ENCODE measurements at regions of chr9 and their contacts with region 1.

Region 1: GRCh38 chr9:32723789-32724325 is 59.5 kb upstream of the TMEM215 start:
- DNase-seq: no peak
- ATAC-seq: no peak
- H3K4me3 ChIP-seq: no peak overlapping the region
- H3K4me3 Mint-ChIP-seq: no peak overlapping the region
- H3K27ac ChIP-seq: no peak overlapping the region
- H3K27ac Mint-ChIP-seq: no peak overlapping the region
- H3K4me1 ChIP-seq: no peaks in the 10 kb centered on the region
- H3K4me1 Mint-ChIP-seq: no peaks in the 10 kb centered on the region
- H3K27me3 ChIP-seq: no peaks in the 10 kb centered on the region
- H3K27me3 Mint-ChIP-seq: peaks cover 14% of the 10 kb centered on the region
- CTCF ChIP-seq: no peak

Region 2: DNA sequence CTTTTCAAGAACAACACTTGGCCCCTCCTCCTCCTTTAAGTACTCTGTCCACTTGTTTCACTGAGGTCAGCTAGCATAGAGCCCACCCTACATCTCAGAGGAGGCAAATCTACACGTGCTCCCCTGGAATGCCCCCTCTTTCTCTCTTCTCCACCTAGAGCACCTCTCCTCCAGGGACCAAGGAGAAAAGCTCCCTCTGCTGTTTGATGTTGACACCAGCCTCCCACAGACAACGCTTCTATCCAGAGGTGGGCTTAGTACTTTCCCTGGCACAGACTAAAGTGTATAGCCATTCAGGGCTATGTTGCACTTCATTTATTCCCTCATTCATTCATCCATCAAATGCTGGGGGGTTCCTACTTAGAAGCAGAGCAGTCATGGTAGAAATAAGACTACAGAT is 20.2 kb before region 1 on chr9:
- CTCF ChIA-PET with region 1: no interaction called
- POLR2A ChIA-PET with region 1: no interaction called
- intact Hi-C with region 1: no loop called
- DNase-seq: no peak
- ATAC-seq: no peak
- H3K4me3 ChIP-seq: no peak overlapping the region
- H3K4me3 Mint-ChIP-seq: no peak overlapping the region
- H3K27ac ChIP-seq: no peak overlapping the region
- H3K27ac Mint-ChIP-seq: no peak overlapping the region
- H3K4me1 ChIP-seq: no peaks in the 10 kb centered on the region
- H3K4me1 Mint-ChIP-seq: no peaks in the 10 kb centered on the region
- H3K27me3 ChIP-seq: no peaks in the 10 kb centered on the region
- H3K27me3 Mint-ChIP-seq: peaks cover 4% of the 10 kb centered on the region
- CTCF ChIP-seq: no peak

Region 3: DNA sequence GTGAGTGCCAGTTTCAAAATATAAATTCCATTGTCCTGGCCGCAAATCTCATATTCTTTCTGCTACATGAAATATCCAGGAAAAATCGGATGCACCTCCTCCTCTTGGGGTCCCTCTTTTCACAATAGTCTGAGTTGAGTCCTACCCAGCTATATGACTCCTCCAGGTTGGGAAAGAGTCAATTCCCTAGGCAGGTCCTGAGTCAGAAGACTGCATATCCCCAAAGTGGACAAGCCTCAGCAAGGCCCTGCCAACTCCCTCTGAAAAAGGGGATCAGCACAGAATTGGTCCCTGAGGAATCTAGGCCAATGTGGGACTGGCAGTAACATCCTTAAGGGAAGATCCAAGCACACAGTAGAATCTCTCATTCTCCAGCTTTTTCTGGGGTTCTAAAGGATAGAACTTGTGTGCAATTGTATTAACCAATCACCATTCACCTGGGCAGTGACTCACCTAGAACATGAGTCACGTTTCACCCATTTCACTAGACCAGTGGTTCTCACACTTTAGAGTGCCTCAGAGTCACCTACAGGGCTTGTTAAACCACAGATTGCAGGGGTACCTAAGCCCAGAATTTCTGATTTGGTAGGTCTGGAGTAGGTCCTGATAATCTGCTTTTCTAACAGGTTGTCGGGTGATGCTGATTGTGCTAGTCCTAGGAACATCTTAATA is 14.8 kb after region 1 on chr9:
- CTCF ChIA-PET with region 1: no interaction called
- POLR2A ChIA-PET with region 1: no interaction called
- intact Hi-C with region 1: loop called in 1 of 2 experiments (anchors 2 kb)
- DNase-seq: no peak
- ATAC-seq: no peak
- H3K4me3 ChIP-seq: no peak overlapping the region
- H3K4me3 Mint-ChIP-seq: no peak overlapping the region
- H3K27ac ChIP-seq: no peak overlapping the region
- H3K27ac Mint-ChIP-seq: no peak overlapping the region
- H3K4me1 ChIP-seq: no peaks in the 10 kb centered on the region
- H3K4me1 Mint-ChIP-seq: no peaks in the 10 kb centered on the region
- H3K27me3 ChIP-seq: no peaks in the 10 kb centered on the region
- H3K27me3 Mint-ChIP-seq: no peaks in the 10 kb centered on the region
- CTCF ChIP-seq: no peak